Heart right ventricle (tissue), 16 donors: ENCODE measurements at regions of chr10 and their contacts with region 1.

Region 1: GRCh38 chr10:33330543-33331378 is 3.7 kb downstream of the NRP1 start:
- DNase-seq: peak; percentile 84 to 92
- ATAC-seq: peak in 6 of 8 donors; percentile 18 to 40 (median 30)
- H3K4me3 ChIP-seq: peak overlapping the region; percentile 71 to 95 (median 92)
- H3K27ac ChIP-seq: peak overlapping the region in 9 of 10 donors; percentile 95 to 100 (median 99)
- H3K4me1 ChIP-seq: peaks cover 3 to 59% (median 47%) of the 10 kb centered on the region in 9 donors
- H3K27me3 ChIP-seq: peaks cover 0 to 11% (median 0%) of the 10 kb centered on the region in 7 donors
- CTCF ChIP-seq: peak; percentile 87 to 96 (median 93)

Region 2: DNA sequence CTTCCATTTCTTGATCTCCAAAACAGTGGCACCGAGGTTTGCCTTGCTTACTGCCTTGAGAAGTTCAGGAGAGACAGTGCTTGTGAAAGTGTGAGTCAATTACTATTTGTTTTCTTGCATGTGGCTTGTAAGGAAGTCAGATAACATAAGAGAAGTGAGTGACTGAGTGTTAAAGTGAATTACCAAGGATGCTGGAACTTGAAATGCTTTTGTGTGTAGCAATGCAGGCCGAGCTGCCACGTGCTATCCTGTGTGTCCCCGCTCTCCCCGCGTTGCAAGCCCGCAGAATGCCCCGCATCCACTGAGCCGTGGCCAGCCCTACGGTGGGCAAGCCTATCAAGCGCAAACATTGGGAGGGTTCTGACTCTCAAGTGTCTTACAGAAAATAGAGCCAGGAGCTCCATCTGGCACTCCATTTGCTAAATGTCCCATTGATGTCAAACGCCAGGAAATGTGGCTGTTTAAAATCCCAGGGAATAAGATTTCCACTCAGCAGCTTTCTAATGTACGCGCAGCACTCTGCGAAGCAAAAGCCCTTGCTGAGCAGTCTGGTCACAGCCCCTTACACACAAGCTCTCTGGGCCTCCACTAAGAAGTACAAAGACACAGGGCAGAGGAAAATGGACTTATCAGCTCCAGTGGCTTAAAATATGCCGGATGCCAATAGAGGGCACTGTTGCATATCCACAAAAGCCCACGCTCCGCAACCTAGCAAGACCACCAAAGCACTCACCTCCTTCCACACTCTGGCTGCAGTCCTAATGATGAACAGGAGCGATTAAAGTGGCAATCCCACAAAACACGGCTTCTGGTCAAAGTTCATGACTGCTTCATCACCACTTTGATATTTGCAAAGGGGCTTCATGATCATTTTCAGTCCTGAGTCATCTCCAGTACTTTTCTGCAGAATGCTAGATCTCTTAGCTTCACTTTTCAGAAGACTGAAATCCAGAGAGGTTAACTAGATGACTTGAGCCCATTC is 214.7 kb before region 1 on chr10:
- intact Hi-C with region 1: loop called in 1 of 10 experiments (anchors 10 kb)
- DNase-seq: peak in 1 of 2 donors; percentile 54
- ATAC-seq: peak in 5 of 8 donors; percentile 47 to 64 (median 54)
- H3K4me3 ChIP-seq: no peak overlapping the region
- H3K27ac ChIP-seq: peak overlapping the region in 5 of 10 donors; percentile 8 to 76 (median 21)
- H3K4me1 ChIP-seq: peaks cover 0 to 66% (median 35%) of the 10 kb centered on the region in 9 donors
- H3K27me3 ChIP-seq: no peaks in the 10 kb centered on the region
- CTCF ChIP-seq: peak; percentile 38 to 69 (median 60)

Region 3: GRCh38 chr10:33291053-33291592 is 39.6 kb before region 1 on chr10:
- intact Hi-C with region 1: loop called in 1 of 10 experiments (anchors 5 kb)
- DNase-seq: no peak
- ATAC-seq: no peak
- H3K4me3 ChIP-seq: no peak overlapping the region
- H3K27ac ChIP-seq: peak overlapping the region in 8 of 10 donors; percentile 2 to 99 (median 46)
- H3K4me1 ChIP-seq: peaks cover 14 to 100% (median 97%) of the 10 kb centered on the region in 9 donors
- H3K27me3 ChIP-seq: no peaks in the 10 kb centered on the region
- CTCF ChIP-seq: no peak

Region 4: DNA sequence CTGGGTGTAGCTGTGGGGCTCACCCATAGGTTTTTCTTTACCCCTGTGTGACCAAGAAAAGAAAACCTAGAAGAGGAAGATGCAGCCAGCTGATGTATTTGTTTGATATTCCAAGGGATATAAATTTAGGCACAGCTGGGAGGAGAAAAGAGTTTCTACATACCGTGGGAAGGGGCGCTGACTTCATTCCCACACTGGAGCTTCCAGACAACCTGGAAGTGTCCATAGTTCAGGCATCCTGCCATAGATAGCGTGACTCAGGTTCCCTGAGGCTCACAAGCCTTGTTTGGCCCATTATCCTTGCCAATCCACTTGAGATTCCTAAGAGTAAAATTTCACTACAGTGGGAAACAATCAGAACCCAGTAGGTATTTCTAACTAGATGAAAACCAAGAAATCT is 375.4 kb after region 1 on chr10:
- intact Hi-C with region 1: loop called in 2 of 10 experiments (anchors 10 kb)
- DNase-seq: peak in 1 of 2 donors; percentile 23
- ATAC-seq: peak in 3 of 8 donors; percentile 68 to 83 (median 77)
- H3K4me3 ChIP-seq: no peak overlapping the region
- H3K27ac ChIP-seq: peak overlapping the region in 4 of 10 donors; percentile 19 to 48 (median 31)
- H3K4me1 ChIP-seq: peaks cover 0 to 33% (median 21%) of the 10 kb centered on the region in 9 donors
- H3K27me3 ChIP-seq: no peaks in the 10 kb centered on the region
- CTCF ChIP-seq: no peak

Region 5: GRCh38 chr10:33801748-33802147 is 471.0 kb after region 1 on chr10:
- intact Hi-C with region 1: loop called in 5 of 10 experiments (anchors 5 to 10 kb)
- DNase-seq: no peak
- ATAC-seq: no peak
- H3K4me3 ChIP-seq: no peak overlapping the region
- H3K27ac ChIP-seq: no peak overlapping the region
- H3K4me1 ChIP-seq: peaks cover 0 to 15% (median 0%) of the 10 kb centered on the region in 9 donors
- H3K27me3 ChIP-seq: no peaks in the 10 kb centered on the region
- CTCF ChIP-seq: no peak

Region 6: GRCh38 chr10:34116220-34116641 is 785.5 kb after region 1 on chr10:
- intact Hi-C with region 1: loop called in 1 of 10 experiments (anchors 5 kb)
- DNase-seq: no peak
- ATAC-seq: peak in 6 of 8 donors; percentile 29 to 72 (median 52)
- H3K4me3 ChIP-seq: peak overlapping the region in 7 of 10 donors; percentile 2 to 41 (median 33)
- H3K27ac ChIP-seq: peak overlapping the region in 1 of 10 donors; percentile 9
- H3K4me1 ChIP-seq: peaks cover 0 to 15% (median 11%) of the 10 kb centered on the region in 9 donors
- H3K27me3 ChIP-seq: no peaks in the 10 kb centered on the region
- CTCF ChIP-seq: peak in 1 of 9 donors; percentile 38